ENCODE measurements at regions of chr11 and their contacts with region 1.

Region 1: GRCh38 chr11:10735481-10736475 is 15.3 kb upstream of the CTR9 start:
- DNase-seq: peak; percentile 89
- H3K4me3 ChIP-seq: peak overlapping the region; percentile 23 to 44 (median 34)
- H3K27ac ChIP-seq: peak overlapping the region; percentile 78
- H3K4me1 ChIP-seq: peaks cover 11% of the 10 kb centered on the region
- H3K27me3 ChIP-seq: no peaks in the 10 kb centered on the region
- CTCF ChIP-seq: peak; percentile 84 to 98

Region 2: GRCh38 chr11:10208131-10208575 is 527.6 kb before region 1 on chr11:
- CTCF ChIA-PET with region 1: no interaction called
- dilution Hi-C with region 1: no loop called
- in situ Hi-C with region 1: no loop called
- intact Hi-C with region 1: loop called (anchors 5 kb)
- DNase-seq: peak; percentile 44
- H3K4me3 ChIP-seq: no peak overlapping the region
- H3K27ac ChIP-seq: no peak overlapping the region
- H3K4me1 ChIP-seq: no peaks in the 10 kb centered on the region
- H3K27me3 ChIP-seq: no peaks in the 10 kb centered on the region
- CTCF ChIP-seq: peak; percentile 62 to 65

Region 3: GRCh38 chr11:10413268-10413667 is 322.5 kb before region 1 on chr11:
- CTCF ChIA-PET with region 1: interaction called, 3 read pairs
- dilution Hi-C with region 1: no loop called
- in situ Hi-C with region 1: loop called (anchors 5 kb)
- intact Hi-C with region 1: loop called (anchors 1 kb)
- DNase-seq: peak; percentile 27
- H3K4me3 ChIP-seq: no peak overlapping the region
- H3K27ac ChIP-seq: no peak overlapping the region
- H3K4me1 ChIP-seq: peaks cover 12% of the 10 kb centered on the region
- H3K27me3 ChIP-seq: no peaks in the 10 kb centered on the region
- CTCF ChIP-seq: peak in 1 of 2 donors; percentile 45

Region 4: DNA sequence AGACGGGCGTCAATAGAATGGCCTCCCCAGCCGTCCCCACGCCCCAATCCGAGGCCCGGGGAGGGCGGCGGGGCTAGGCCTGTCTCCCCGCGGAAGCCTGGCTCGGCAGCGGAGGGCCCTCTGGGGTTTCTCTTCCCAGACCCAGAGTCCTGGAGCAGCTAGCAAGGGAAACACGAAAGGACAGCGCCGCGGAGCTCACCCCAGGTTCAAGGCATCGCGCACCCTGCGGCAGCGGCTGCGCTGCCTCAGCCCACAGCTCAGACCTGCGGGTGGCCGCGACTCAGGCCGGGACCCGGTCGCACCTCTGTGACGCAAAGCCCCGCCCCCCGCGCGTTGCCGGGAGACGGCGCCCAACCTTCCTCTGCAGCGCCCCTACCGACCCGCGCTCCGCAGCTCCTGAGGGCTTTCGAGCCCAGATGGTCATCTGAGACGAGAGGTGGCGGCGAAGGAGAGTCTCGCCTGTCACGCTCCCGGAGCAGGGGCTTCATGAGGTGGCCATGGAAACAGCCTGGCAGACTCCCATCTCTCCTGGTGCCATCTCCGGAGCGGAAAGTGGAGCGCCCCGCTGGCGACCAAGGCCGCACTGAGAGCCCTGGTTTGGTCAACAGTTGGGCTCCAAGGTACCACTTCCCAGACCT is 194.7 kb before region 1 on chr11 and contains the start of gene RNF141:
- CTCF ChIA-PET with region 1: interaction called, 4 read pairs
- dilution Hi-C with region 1: no loop called
- in situ Hi-C with region 1: no loop called
- intact Hi-C with region 1: loop called (anchors 1 kb)
- DNase-seq: peak; percentile 91
- H3K4me3 ChIP-seq: peak within 1 kb of the TSS; percentile 64 to 89 (median 72)
- H3K27ac ChIP-seq: peak within 1 kb of the TSS; percentile 85
- H3K4me1 ChIP-seq: peaks cover 9% of the 10 kb centered on the region
- H3K27me3 ChIP-seq: no peaks in the 10 kb centered on the region
- CTCF ChIP-seq: peak; percentile 69 to 91
- total RNA-seq, gene RNF141: 45.7 to 58.2 TPM

Region 5: DNA sequence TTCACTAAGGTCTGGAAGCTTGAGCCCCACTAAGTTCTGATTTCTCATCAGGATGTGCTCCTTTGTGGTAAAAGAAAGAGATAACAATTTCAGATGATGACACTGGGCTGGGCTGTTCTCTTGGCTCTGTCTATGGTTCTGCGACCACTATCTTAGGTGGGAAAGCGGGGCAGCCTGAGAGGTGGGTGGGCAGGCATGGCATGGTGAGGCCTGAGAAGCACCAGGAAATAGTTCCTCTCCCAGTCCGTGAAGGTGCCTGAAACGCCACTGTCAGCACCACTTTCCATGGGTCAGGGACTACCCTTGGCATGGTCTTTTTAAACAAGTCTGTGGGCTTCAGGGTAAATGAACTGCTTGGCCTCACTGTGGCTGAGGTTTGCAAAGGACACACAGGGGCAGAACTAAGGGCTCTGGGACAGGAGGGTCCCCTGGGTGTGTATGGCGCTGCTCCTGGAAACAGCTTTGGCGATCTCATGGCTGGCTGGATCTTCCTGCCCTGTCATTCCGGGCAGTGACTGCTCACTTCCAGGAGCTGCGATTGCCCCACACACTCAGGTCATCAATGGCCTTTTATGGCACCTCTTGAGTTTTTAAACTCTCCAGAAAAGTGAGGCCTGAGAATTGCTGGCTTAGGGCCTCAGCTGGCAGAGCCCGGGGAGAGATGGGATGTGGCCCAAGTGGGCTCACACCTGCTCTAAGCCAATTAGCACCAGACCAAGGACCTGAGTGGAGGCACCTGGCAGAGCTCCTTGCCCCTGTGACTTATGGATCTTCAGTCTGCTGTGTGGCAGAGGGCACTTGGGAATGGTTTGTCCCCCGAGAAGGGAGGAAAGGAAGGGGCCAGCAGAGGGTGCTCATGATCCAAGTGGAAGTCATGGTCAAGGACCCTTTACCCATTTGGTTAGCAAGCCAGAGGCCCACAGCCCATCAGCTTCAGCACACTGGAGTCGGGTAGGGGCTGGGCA is 111.7 kb before region 1 on chr11:
- CTCF ChIA-PET with region 1: no interaction called
- dilution Hi-C with region 1: no loop called
- in situ Hi-C with region 1: no loop called
- intact Hi-C with region 1: loop called (anchors 1 kb)
- DNase-seq: no peak
- H3K4me3 ChIP-seq: no peak overlapping the region
- H3K27ac ChIP-seq: no peak overlapping the region
- H3K4me1 ChIP-seq: peaks cover 7% of the 10 kb centered on the region
- H3K27me3 ChIP-seq: no peaks in the 10 kb centered on the region
- CTCF ChIP-seq: peak; percentile 23 to 46

Region 6: GRCh38 chr11:10674911-10675440 is 60.8 kb before region 1 on chr11:
- CTCF ChIA-PET with region 1: no interaction called
- dilution Hi-C with region 1: loop called (anchors 5 kb)
- in situ Hi-C with region 1: no loop called
- intact Hi-C with region 1: no loop called
- DNase-seq: no peak
- H3K4me3 ChIP-seq: no peak overlapping the region
- H3K27ac ChIP-seq: no peak overlapping the region
- H3K4me1 ChIP-seq: no peaks in the 10 kb centered on the region
- H3K27me3 ChIP-seq: no peaks in the 10 kb centered on the region
- CTCF ChIP-seq: no peak